PC-9 (cell line): ENCODE measurements at regions of chr6 and their contacts with region 1.

Region 1: GRCh38 chr6:12289933-12290820 is at the start of gene EDN1:
- DNase-seq: peak; percentile 85 to 99
- H3K4me3 ChIP-seq: peak within 1 kb of the TSS; percentile 72
- H3K27ac ChIP-seq: peak within 1 kb of the TSS; percentile 92
- H3K4me1 ChIP-seq: peaks cover 66% of the 10 kb centered on the region
- H3K27me3 ChIP-seq: no peaks in the 10 kb centered on the region
- CTCF ChIP-seq: peak; percentile 45; the same call in 1 of the 2 replicates
- total RNA-seq, gene EDN1: 3.3 and 5.9 TPM in 2 replicates

Region 2: GRCh38 chr6:11632795-11633511 is 657.2 kb before region 1 on chr6:
- CTCF ChIA-PET with region 1: no interaction called
- POLR2A ChIA-PET with region 1: interaction called, 10 read pairs
- intact Hi-C with region 1: no loop called
- DNase-seq: peak in 1 of 2 experiments; percentile 40
- H3K4me3 ChIP-seq: no peak overlapping the region
- H3K27ac ChIP-seq: peak overlapping the region; percentile 18
- H3K4me1 ChIP-seq: peaks cover 9% of the 10 kb centered on the region
- H3K27me3 ChIP-seq: no peaks in the 10 kb centered on the region
- CTCF ChIP-seq: no peak

Region 3: DNA sequence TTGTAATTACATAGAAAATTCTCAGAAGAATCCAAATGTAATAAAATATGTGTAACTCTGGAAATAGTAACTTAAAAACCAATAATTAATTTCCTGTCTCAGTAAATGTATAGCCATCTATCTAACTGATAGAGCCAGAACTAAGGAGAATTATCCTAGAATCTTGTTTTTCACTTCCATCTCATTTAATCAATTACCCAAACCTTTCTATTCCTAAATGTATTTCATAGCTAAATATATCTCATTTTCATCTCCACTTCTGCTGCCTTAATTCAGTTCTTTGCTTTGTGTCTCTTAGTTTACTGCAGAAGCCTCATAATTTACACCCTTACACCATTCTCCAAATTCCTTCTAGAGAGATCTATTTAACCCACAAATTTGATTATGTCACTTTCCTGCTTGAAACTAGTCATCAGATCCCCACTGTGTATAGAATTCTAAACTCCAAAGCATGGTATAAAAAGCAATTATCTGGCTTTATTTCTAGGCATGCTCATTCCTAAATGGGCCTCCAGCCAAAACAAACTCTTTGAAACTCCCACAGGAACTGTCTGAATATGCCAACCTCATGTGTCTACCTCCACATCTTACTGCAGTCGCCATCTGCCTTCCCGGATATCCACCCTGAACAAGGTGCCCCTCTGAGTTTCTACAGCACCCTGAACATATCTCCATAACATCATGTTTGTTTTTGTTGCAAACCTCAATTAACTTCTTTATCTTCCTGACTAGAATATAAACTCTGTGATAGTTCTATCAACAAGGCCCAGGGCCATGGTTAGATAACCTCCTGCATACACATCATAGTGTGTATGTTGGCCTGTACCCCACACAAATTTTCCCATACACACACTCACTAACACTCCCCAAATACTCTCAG is 441.1 kb before region 1 on chr6:
- CTCF ChIA-PET with region 1: interaction called, 5 read pairs
- POLR2A ChIA-PET with region 1: interaction called, 10 read pairs
- intact Hi-C with region 1: loop called (anchors 10 kb)
- DNase-seq: no peak
- H3K4me3 ChIP-seq: no peak overlapping the region
- H3K27ac ChIP-seq: no peak overlapping the region
- H3K4me1 ChIP-seq: peaks cover 34% of the 10 kb centered on the region
- H3K27me3 ChIP-seq: no peaks in the 10 kb centered on the region
- CTCF ChIP-seq: no peak

Region 4: DNA sequence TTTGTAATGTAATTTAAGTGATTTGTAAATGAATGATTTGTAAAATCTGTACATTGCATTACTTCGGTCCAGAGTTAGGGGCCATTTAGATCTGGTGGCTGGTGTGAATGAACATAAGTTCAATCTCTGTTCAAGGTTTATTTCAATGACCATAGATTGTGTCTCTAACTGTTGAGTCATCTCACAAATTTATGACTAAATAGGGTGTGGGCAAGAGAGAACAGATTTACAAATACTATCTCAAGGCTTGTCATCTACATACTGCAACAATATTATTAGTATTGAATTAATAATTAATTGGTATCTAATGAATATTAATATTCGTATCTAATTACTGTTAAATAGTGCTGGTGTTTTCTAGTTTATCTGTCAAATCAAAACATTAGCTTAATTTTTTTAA is 115.3 kb before region 1 on chr6:
- CTCF ChIA-PET with region 1: no interaction called
- POLR2A ChIA-PET with region 1: interaction called, 10 read pairs
- intact Hi-C with region 1: no loop called
- DNase-seq: peak in 1 of 2 experiments; percentile 48
- H3K4me3 ChIP-seq: no peak overlapping the region
- H3K27ac ChIP-seq: no peak overlapping the region
- H3K4me1 ChIP-seq: peaks cover 10% of the 10 kb centered on the region
- H3K27me3 ChIP-seq: no peaks in the 10 kb centered on the region
- CTCF ChIP-seq: no peak

Region 5: DNA sequence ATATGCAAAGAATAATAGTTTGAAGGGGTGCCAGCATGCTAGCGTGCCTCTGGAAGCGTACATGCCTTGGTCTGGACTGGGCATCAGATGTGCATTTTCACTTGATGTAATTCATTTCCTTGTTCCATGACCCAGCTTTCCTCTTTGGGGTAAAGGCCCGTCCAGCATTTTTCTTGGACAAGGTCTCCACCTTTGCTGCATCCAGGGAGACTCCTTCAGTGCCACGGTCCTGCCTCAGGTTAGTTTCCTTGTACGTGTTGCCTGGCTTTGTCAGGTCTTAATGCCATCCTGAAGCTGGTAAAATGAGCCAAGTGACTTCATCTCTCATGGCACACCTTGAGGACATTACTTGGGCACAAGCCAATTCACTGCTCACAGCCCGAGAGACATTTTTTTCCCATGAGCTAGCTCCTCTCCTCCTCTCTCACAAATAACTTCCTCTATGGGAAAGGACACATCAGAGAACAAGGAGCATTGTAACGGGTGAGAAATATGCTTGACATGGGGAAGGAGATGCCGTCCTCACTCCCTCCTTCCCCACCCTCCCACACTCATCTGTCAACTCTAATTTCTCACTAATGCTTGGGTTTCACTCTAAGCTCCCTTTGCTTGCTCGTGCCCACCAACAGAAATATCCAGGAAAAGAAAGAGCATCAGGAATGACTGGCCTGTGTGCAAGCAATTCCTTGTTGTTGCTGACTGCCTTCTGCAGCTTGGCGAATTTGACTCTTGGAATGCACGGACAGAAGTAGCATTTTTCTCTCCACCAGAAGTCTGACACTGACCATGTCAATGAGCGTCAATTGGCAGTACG is 24.0 kb after region 1 on chr6:
- CTCF ChIA-PET with region 1: interaction called, 9 read pairs
- POLR2A ChIA-PET with region 1: interaction called, 87 read pairs
- intact Hi-C with region 1: loop called (anchors 1 kb)
- DNase-seq: peak; percentile 87 to 100
- H3K4me3 ChIP-seq: peak overlapping the region; percentile 30; the same call in 1 of the 2 replicates
- H3K27ac ChIP-seq: peak overlapping the region; percentile 88
- H3K4me1 ChIP-seq: peaks cover 27% of the 10 kb centered on the region
- H3K27me3 ChIP-seq: no peaks in the 10 kb centered on the region
- CTCF ChIP-seq: no peak

Region 6: DNA sequence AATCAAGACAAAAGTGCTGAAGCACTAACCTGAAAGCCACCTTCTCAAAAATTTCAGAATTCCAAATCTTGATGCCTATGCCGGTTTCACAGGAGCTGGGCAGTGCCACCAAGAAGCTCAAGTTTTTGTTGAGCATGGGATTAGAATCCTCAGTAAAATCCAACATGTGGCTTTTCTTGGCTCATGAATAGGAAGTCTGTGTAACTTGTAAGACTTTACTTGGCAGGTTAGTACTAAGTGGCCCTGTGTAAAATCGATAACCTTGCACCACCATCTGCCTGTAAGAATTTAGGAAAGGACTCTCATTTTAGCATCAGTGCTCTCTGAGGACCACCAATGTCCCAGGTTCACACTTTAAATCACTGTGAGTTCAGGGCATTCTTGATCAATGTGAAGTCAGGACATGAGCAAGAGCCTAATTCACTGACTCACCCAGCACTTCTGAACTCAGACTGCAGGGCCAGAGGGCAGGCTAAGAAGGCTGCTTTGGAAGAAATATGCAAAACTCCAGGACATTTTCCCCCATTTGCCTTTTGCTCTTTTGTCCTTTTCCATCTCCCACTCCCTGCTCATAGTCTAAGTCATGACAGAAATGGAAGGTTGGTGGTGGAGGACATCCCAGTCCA is 113.1 kb after region 1 on chr6:
- CTCF ChIA-PET with region 1: no interaction called
- POLR2A ChIA-PET with region 1: interaction called, 17 read pairs
- intact Hi-C with region 1: no loop called
- DNase-seq: peak in 1 of 2 experiments; percentile 43
- H3K4me3 ChIP-seq: no peak overlapping the region
- H3K27ac ChIP-seq: no peak overlapping the region
- H3K4me1 ChIP-seq: no peaks in the 10 kb centered on the region
- H3K27me3 ChIP-seq: no peaks in the 10 kb centered on the region
- CTCF ChIP-seq: no peak

Region 7: GRCh38 chr6:12890171-12890790 is 600.1 kb after region 1 on chr6:
- CTCF ChIA-PET with region 1: no interaction called
- POLR2A ChIA-PET with region 1: no interaction called
- intact Hi-C with region 1: loop called (anchors 5 kb)
- DNase-seq: peak in 1 of 2 experiments; percentile 15
- H3K4me3 ChIP-seq: no peak overlapping the region
- H3K27ac ChIP-seq: no peak overlapping the region
- H3K4me1 ChIP-seq: no peaks in the 10 kb centered on the region
- H3K27me3 ChIP-seq: peaks cover 21% of the 10 kb centered on the region
- CTCF ChIP-seq: peak; percentile 73